ENCODE measurements at regions of chr7 and their contacts with region 1.

Region 1: DNA sequence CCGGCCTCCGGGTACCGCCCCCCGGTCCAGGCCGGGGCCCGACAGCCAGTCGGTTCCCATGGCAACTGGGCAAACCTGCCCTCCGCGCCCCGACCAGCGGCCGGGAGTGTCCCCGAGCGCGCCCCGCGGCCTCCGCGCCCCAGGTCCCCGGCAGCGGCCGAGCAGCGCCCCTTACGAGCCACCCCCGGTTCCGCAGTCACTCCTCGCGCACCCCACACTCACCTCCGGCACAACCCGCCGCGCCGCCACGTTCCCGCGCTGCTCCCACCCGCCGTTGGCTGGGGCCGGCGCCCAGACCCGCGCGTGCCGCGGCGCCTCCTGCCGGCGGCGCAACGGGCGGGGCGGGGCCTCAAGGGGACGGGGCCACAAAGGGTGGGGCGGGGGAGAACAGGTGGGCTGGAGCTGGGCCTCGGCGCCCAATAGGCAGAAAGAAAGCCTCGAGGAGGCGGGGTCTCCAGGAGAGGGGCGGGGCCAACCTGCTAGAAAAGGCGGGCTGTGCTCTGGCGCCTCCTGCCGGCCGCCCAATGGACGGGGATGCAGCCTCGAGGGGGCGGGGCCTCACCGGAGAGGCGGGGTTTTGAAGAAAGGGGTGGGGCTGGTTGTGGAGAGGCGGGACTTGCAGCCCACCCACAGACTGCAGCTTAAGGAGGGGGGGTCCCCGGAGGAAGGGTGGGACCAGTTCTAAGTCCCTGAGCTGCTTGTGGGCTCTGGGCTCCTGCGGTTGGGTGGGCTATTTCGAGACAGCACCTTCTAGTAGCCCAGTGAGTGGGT is at the start of gene RADIL:
- DNase-seq: peak; percentile 98
- ATAC-seq: peak; percentile 92
- H3K4me3 Mint-ChIP-seq: peak within 1 kb of the TSS; percentile 81
- H3K27ac Mint-ChIP-seq: peak within 1 kb of the TSS; percentile 50
- H3K4me1 Mint-ChIP-seq: peaks cover 13% of the 10 kb centered on the region
- H3K27me3 Mint-ChIP-seq: peaks cover 12% of the 10 kb centered on the region; the same call in 1 of the 2 replicates
- CTCF ChIP-seq: peak; percentile 88
- total RNA-seq, gene RADIL: 8.6 to 12.1 TPM (median 11.1 TPM) in 3 replicates

Region 2: DNA sequence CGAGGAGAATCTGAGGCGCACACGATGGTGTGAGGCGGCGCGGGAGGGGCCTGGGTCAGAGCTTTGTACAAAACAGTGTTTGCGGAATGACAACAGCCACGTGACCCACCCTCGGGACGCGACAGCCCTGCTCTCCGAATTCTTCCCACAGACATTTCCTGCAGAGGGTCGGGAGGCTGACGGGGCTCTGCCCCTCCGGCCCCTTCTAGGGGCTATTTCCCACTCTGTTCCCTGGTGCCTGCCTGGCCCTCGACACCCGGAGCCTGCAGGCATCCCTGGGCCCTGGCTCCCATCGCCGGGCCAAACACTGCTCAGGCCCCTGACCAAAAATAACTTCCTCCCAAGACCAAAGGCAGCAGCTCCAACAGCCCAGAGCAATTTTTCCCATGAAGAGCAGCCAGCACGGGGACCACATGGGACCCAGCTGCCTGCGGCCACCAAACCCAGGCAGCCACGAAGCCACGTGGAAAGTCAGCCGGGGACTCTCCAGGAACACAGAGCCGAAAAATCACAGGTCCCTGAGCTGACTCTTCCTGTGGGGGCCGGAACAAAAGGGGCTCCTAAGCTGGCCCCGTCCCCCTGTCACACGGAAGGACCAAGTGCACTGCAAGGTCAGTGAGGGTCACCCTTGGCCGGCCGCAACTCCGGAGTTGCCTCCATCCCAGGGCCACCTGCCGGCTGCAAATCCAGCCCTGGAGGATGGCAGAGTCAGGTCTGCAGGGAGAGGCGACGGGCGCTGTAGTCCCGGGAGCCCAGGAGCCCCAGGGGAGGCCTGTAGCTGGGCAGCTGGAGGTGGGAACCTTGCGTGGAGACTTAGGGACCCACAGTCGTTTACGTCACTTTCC is 63.8 kb before region 1 on chr7:
- CTCF ChIA-PET with region 1: interaction called, 17 read pairs
- POLR2A ChIA-PET with region 1: no interaction called
- DNase-seq: no peak
- ATAC-seq: no peak
- H3K4me3 Mint-ChIP-seq: no peak overlapping the region
- H3K27ac Mint-ChIP-seq: no peak overlapping the region
- H3K4me1 Mint-ChIP-seq: no peaks in the 10 kb centered on the region
- H3K27me3 Mint-ChIP-seq: no peaks in the 10 kb centered on the region
- CTCF ChIP-seq: no peak

Region 3: GRCh38 chr7:4845740-4846142 is 37.8 kb before region 1 on chr7:
- CTCF ChIA-PET with region 1: interaction called, 41 read pairs
- POLR2A ChIA-PET with region 1: no interaction called
- DNase-seq: peak; percentile 79
- ATAC-seq: peak; percentile 96
- H3K4me3 Mint-ChIP-seq: no peak overlapping the region
- H3K27ac Mint-ChIP-seq: peak overlapping the region; percentile 49; the same call in 1 of the 2 replicates
- H3K4me1 Mint-ChIP-seq: peaks cover 7% of the 10 kb centered on the region
- H3K27me3 Mint-ChIP-seq: no peaks in the 10 kb centered on the region
- CTCF ChIP-seq: peak; percentile 43; the same call in 1 of the 2 replicates

Region 4: GRCh38 chr7:4895766-4896165 is 12.2 kb after region 1 on chr7:
- CTCF ChIA-PET with region 1: interaction called, 21 read pairs
- POLR2A ChIA-PET with region 1: no interaction called
- DNase-seq: no peak
- ATAC-seq: no peak
- H3K4me3 Mint-ChIP-seq: no peak overlapping the region
- H3K27ac Mint-ChIP-seq: no peak overlapping the region
- H3K4me1 Mint-ChIP-seq: peaks cover 12% of the 10 kb centered on the region
- H3K27me3 Mint-ChIP-seq: peaks cover 4% of the 10 kb centered on the region
- CTCF ChIP-seq: no peak

Region 5: DNA sequence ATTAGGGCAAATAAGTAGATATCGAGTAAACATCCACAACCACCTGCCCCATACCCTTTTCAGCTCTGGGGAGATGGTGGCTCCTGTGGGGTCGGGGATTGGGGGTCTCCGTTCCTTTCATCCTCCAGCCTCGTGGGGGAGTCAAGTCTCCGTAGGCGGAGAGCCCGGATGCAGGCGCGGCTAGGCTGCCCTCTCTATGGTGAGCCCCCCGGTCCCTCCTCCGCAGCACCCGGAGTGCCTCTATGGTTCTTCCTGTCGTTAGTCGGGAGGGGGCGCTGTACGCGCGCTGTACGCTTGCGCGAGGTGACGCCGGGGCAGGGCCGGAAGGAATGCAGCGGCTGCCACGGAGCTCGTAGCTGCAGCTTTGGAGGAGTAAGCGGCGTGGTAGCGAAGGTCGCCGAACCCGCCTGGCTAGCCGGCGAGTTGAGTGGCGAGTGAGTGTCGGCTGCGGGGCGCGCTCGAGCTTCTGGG is 90.2 kb after region 1 on chr7:
- CTCF ChIA-PET with region 1: interaction called, 34 read pairs
- POLR2A ChIA-PET with region 1: interaction called, 3 read pairs
- DNase-seq: peak; percentile 95
- ATAC-seq: peak; percentile 98
- H3K4me3 Mint-ChIP-seq: peak overlapping the region; percentile 93
- H3K27ac Mint-ChIP-seq: peak overlapping the region; percentile 94
- H3K4me1 Mint-ChIP-seq: no peaks in the 10 kb centered on the region
- H3K27me3 Mint-ChIP-seq: no peaks in the 10 kb centered on the region; the same call in 1 of the 2 replicates
- CTCF ChIP-seq: peak; percentile 81; the same call in 1 of the 2 replicates

Measured in WTC11 (cell line).